GM12878 (cell line): ENCODE measurements at regions of chr19 and their contacts with region 1.

Region 1: GRCh38 chr19:13155472-13156359 is 5.5 kb downstream of the IER2 start:
- DNase-seq: no peak
- ATAC-seq: peak; percentile 28
- H3K4me3 ChIP-seq: peak overlapping the region; percentile 99
- H3K27ac ChIP-seq: peak overlapping the region; percentile 95
- H3K4me1 ChIP-seq: peaks cover 26% of the 10 kb centered on the region
- H3K27me3 ChIP-seq: no peaks in the 10 kb centered on the region
- CTCF ChIP-seq: no peak
- EP300 ChIP-seq: peak; percentile 81 to 83
- POLR2A ChIP-seq: peak; percentile 53
- RAD21 ChIP-seq: no peak

Region 2: GRCh38 chr19:12996406-12997094 is 159.2 kb before region 1 on chr19:
- CTCF ChIA-PET with region 1: no interaction called
- POLR2A ChIA-PET with region 1: no interaction called
- RAD21 ChIA-PET with region 1: no interaction called
- SMC1A ChIA-PET with region 1: no interaction called
- in situ Hi-C with region 1: no loop called
- intact Hi-C with region 1: no loop called
- DNase-seq: no peak
- ATAC-seq: no peak
- H3K4me3 ChIP-seq: no peak overlapping the region
- H3K27ac ChIP-seq: no peak overlapping the region
- H3K4me1 ChIP-seq: no peaks in the 10 kb centered on the region
- H3K27me3 ChIP-seq: peaks cover 4 to 6% of the 10 kb centered on the region in 2 experiments; a peak in 3 of 4 replicates
- CTCF ChIP-seq: no peak
- EP300 ChIP-seq: no peak
- POLR2A ChIP-seq: no peak
- RAD21 ChIP-seq: no peak

Region 3: DNA sequence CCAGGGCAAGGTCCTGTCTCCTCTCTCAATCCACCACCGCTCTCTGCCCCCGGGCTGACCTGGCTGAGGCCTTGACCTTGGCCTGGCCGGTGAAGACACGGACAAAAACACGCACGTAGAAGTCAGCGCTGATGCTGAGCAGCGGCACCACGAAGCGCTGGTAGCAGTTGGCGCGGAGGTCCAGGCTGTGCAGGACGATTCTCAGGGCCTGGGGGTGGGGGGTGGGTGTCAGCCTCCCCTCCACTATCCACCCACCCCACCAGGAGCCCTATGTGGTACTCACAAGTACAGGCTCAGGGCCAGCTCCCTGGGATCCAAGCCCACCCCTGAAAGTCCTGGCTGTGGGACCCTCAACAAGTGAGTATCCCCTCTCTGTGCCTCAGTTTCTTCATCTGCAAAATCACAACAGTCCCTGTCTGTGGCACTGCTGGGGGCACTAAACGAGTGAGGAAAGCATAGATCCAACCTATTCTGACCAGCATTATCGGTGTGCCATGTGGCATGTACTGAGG is 45.6 kb before region 1 on chr19:
- CTCF ChIA-PET with region 1: no interaction called
- POLR2A ChIA-PET with region 1: no interaction called
- RAD21 ChIA-PET with region 1: no interaction called
- SMC1A ChIA-PET with region 1: no interaction called
- in situ Hi-C with region 1: no loop called
- intact Hi-C with region 1: no loop called
- DNase-seq: no peak
- ATAC-seq: no peak
- H3K4me3 ChIP-seq: no peak overlapping the region
- H3K27ac ChIP-seq: no peak overlapping the region
- H3K4me1 ChIP-seq: peaks cover 8% of the 10 kb centered on the region
- H3K27me3 ChIP-seq: no peaks in the 10 kb centered on the region
- CTCF ChIP-seq: no peak
- EP300 ChIP-seq: no peak
- POLR2A ChIP-seq: no peak
- RAD21 ChIP-seq: no peak

Region 4: GRCh38 chr19:13172068-13172896 is 16.6 kb after region 1 on chr19:
- CTCF ChIA-PET with region 1: interaction called, 10 read pairs
- POLR2A ChIA-PET with region 1: interaction called, 15 read pairs
- RAD21 ChIA-PET with region 1: interaction called, 39 read pairs
- SMC1A ChIA-PET with region 1: interaction called, 37 read pairs
- in situ Hi-C with region 1: no loop called
- intact Hi-C with region 1: loop called (anchors 1 kb)
- DNase-seq: no peak
- ATAC-seq: no peak
- H3K4me3 ChIP-seq: no peak overlapping the region
- H3K27ac ChIP-seq: no peak overlapping the region
- H3K4me1 ChIP-seq: peaks cover 26% of the 10 kb centered on the region
- H3K27me3 ChIP-seq: no peaks in the 10 kb centered on the region
- CTCF ChIP-seq: no peak
- EP300 ChIP-seq: no peak
- POLR2A ChIP-seq: no peak
- RAD21 ChIP-seq: no peak

Region 5: GRCh38 chr19:13181747-13182388 is 26.2 kb after region 1 on chr19:
- CTCF ChIA-PET with region 1: interaction called, 7 read pairs
- POLR2A ChIA-PET with region 1: interaction called, 19 read pairs
- RAD21 ChIA-PET with region 1: interaction called, 22 read pairs
- SMC1A ChIA-PET with region 1: interaction called, 17 read pairs
- in situ Hi-C with region 1: no loop called
- intact Hi-C with region 1: no loop called
- DNase-seq: no peak
- ATAC-seq: peak; percentile 87
- H3K4me3 ChIP-seq: no peak overlapping the region
- H3K27ac ChIP-seq: peak overlapping the region; percentile 52
- H3K4me1 ChIP-seq: peaks cover 17% of the 10 kb centered on the region
- H3K27me3 ChIP-seq: no peaks in the 10 kb centered on the region
- CTCF ChIP-seq: no peak
- EP300 ChIP-seq: no peak; a peak in 1 of 4 replicates
- POLR2A ChIP-seq: no peak
- RAD21 ChIP-seq: no peak

Region 6: GRCh38 chr19:13195678-13196077 is 40.0 kb after region 1 on chr19:
- CTCF ChIA-PET with region 1: interaction called, 12 read pairs
- POLR2A ChIA-PET with region 1: interaction called, 8 read pairs
- RAD21 ChIA-PET with region 1: interaction called, 4 read pairs
- SMC1A ChIA-PET with region 1: interaction called, 6 read pairs
- in situ Hi-C with region 1: no loop called
- intact Hi-C with region 1: loop called (anchors 5 kb)
- DNase-seq: no peak
- ATAC-seq: peak; percentile 88
- H3K4me3 ChIP-seq: no peak overlapping the region
- H3K27ac ChIP-seq: no peak overlapping the region
- H3K4me1 ChIP-seq: peaks cover 6% of the 10 kb centered on the region; the same call in 1 of the 2 replicates
- H3K27me3 ChIP-seq: no peaks in the 10 kb centered on the region
- CTCF ChIP-seq: peak; percentile 62 to 75 (median 75); a peak in 5 of 6 replicates
- EP300 ChIP-seq: no peak
- POLR2A ChIP-seq: no peak
- RAD21 ChIP-seq: peak; percentile 81

Region 7: GRCh38 chr19:14383661-14384555 is 1228.2 kb after region 1 on chr19:
- CTCF ChIA-PET with region 1: no interaction called
- POLR2A ChIA-PET with region 1: interaction called, 11 read pairs
- RAD21 ChIA-PET with region 1: no interaction called
- SMC1A ChIA-PET with region 1: no interaction called
- in situ Hi-C with region 1: loop called (anchors 10 kb)
- intact Hi-C with region 1: no loop called
- DNase-seq: no peak
- ATAC-seq: peak; percentile 60
- H3K4me3 ChIP-seq: peak overlapping the region; percentile 86
- H3K27ac ChIP-seq: peak overlapping the region; percentile 98
- H3K4me1 ChIP-seq: peaks cover 20% of the 10 kb centered on the region
- H3K27me3 ChIP-seq: no peaks in the 10 kb centered on the region
- CTCF ChIP-seq: no peak
- EP300 ChIP-seq: peak; percentile 55 to 70
- POLR2A ChIP-seq: peak; percentile 58; the same call in 1 of the 2 replicates
- RAD21 ChIP-seq: no peak